ENCODE measurements at regions of chr11 and their contacts with region 1.

Region 1: GRCh38 chr11:112113539-112114457 is 27.1 kb downstream of the SDHD start:
- DNase-seq: no peak
- ATAC-seq: peak; percentile 85

Region 2: GRCh38 chr11:112174789-112175598 is 61.2 kb after region 1 on chr11 and contains the start of gene BCO2:
- intact Hi-C with region 1: loop called in 1 of 2 experiments (anchors 5 kb)
- DNase-seq: peak; percentile 84
- ATAC-seq: peak; percentile 95
- total RNA-seq, gene BCO2: 3.4 to 4.3 TPM

Region 3: DNA sequence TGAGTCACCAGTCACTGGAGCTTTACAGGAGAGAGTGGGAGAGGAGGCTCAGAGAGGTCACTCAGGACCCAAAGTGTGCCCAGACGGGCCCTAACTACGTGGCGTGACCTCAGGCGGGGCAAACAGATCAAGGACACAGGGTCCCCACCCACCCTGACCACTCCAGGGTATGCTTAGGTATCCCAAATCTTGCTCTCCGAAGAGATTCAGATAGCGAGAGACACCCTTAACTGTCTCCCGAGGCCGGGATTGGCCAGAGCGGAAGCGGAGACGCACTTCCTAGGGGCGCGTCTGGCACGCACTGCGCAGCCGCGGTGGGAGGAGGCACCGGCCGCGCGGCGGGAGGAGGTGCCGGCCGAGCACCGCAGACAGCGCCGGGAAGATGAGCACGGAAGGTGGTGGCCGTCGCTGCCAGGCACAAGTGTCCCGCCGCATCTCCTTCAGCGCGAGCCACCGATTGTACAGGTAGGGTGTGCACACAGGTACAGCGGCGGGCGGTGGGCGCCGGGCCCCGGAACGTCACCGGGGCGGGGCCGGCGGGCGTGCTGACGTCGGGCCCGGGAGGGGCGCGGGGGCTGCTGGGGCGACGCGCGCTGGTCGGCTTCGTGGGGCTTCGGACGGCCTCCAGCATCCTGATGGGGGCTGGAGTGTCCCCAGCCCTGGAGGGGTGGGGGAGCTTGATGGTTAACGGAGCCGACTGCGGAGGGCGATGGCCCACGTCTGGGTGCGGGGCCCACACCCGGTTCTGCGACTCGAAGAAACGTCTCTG is 112.4 kb after region 1 on chr11 and contains the start of gene PTS:
- intact Hi-C with region 1: no loop called
- DNase-seq: peak; percentile 88 to 89
- ATAC-seq: peak; percentile 97
- total RNA-seq, gene PTS: 33.0 to 36.6 TPM